ENCODE measurements at regions of chr2 and their contacts with region 1.

Region 1: DNA sequence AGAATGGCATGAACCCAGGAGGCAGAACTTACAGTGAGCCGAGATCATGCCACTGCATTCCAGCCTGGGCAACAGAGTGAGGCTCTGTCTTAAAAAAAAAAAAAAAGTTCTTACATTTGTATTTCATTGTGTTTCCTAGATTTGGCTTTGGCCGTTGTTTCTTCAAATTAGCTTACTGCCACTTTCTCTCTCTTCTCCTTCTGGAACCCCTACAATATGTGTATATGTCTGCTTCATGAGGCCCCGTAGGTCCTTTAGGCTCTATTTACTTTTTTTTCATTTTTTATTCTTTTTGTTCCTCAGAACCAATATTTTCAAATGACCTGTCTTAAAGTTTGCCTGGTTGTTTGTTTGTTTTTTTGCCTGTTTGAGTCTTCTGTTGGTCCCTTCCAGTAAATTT is 41.2 kb downstream of the RMDN2 start:
- DNase-seq: no peak
- ATAC-seq: no peak
- H3K4me3 ChIP-seq: no peak overlapping the region
- H3K27ac ChIP-seq: no peak overlapping the region
- H3K4me1 ChIP-seq: peaks cover 20% of the 10 kb centered on the region
- H3K27me3 ChIP-seq: no peaks in the 10 kb centered on the region
- CTCF ChIP-seq: no peak
- EP300 ChIP-seq: no peak
- POLR2A ChIP-seq: no peak
- RAD21 ChIP-seq: no peak

Region 2: GRCh38 chr2:37173741-37174140 is 792.6 kb before region 1 on chr2:
- CTCF ChIA-PET with region 1: no interaction called
- POLR2A ChIA-PET with region 1: no interaction called
- in situ Hi-C with region 1: no loop called
- intact Hi-C with region 1: no loop called
- DNase-seq: no peak
- ATAC-seq: no peak
- H3K4me3 ChIP-seq: no peak overlapping the region
- H3K27ac ChIP-seq: no peak overlapping the region
- H3K4me1 ChIP-seq: peaks cover 15% of the 10 kb centered on the region
- H3K27me3 ChIP-seq: peaks cover 0 to 16% of the 10 kb centered on the region in 2 experiments; a peak in 2 of 5 replicates
- CTCF ChIP-seq: no peak
- EP300 ChIP-seq: no peak
- POLR2A ChIP-seq: no peak
- RAD21 ChIP-seq: no peak

Region 3: DNA sequence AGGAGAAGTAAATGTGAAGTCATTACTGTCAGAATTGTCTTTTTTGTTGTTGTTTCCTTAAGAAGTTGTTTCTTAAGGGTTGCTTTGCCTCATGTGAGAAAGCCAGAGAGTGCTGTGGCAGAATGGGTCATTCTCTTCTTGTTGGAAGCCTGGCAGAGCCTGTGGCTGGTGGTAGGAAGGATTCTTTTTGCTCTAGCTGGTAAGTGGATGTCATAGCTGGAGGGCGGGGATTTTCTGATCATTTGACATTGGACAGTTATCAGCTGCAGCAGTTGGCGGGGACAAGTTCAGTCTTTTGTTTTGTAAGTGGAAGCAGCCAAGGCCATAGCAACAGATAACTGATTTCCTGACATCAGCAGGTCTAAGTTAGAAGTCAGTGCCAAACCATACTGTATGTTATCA is 46.7 kb before region 1 on chr2:
- CTCF ChIA-PET with region 1: no interaction called
- POLR2A ChIA-PET with region 1: interaction called, 23 read pairs
- in situ Hi-C with region 1: no loop called
- intact Hi-C with region 1: loop called (anchors 1 kb)
- DNase-seq: peak; percentile 95
- ATAC-seq: peak; percentile 80
- H3K4me3 ChIP-seq: peak overlapping the region; percentile 6 to 44 (median 39); a peak in 4 of 6 replicates
- H3K27ac ChIP-seq: peak overlapping the region; percentile 91
- H3K4me1 ChIP-seq: peaks cover 94% of the 10 kb centered on the region
- H3K27me3 ChIP-seq: no peaks in the 10 kb centered on the region
- CTCF ChIP-seq: no peak
- EP300 ChIP-seq: peak in 1 of 2 experiments; percentile 82; a peak in 2 of 4 replicates
- POLR2A ChIP-seq: peak in 1 of 2 experiments; percentile 65; a peak in 2 of 4 replicates
- RAD21 ChIP-seq: no peak

Region 4: GRCh38 chr2:37925063-37925897 is 41.0 kb before region 1 on chr2 and contains the start of gene RMDN2:
- CTCF ChIA-PET with region 1: no interaction called
- POLR2A ChIA-PET with region 1: interaction called, 23 read pairs
- in situ Hi-C with region 1: no loop called
- intact Hi-C with region 1: loop called (anchors 1 kb)
- DNase-seq: peak; percentile 97
- ATAC-seq: peak; percentile 97
- H3K4me3 ChIP-seq: peak within 1 kb of the TSS; percentile 78 to 97 (median 90)
- H3K27ac ChIP-seq: peak within 1 kb of the TSS; percentile 98
- H3K4me1 ChIP-seq: peaks cover 75% of the 10 kb centered on the region
- H3K27me3 ChIP-seq: no peaks in the 10 kb centered on the region
- CTCF ChIP-seq: peak; percentile 63
- EP300 ChIP-seq: peak in 1 of 2 experiments; percentile 75; a peak in 2 of 4 replicates
- POLR2A ChIP-seq: peak; percentile 97 to 98
- RAD21 ChIP-seq: peak; percentile 84; the same call in 1 of the 2 replicates
- total RNA-seq, gene RMDN2: 4.7 and 8.9 TPM in 2 replicates

Region 5: DNA sequence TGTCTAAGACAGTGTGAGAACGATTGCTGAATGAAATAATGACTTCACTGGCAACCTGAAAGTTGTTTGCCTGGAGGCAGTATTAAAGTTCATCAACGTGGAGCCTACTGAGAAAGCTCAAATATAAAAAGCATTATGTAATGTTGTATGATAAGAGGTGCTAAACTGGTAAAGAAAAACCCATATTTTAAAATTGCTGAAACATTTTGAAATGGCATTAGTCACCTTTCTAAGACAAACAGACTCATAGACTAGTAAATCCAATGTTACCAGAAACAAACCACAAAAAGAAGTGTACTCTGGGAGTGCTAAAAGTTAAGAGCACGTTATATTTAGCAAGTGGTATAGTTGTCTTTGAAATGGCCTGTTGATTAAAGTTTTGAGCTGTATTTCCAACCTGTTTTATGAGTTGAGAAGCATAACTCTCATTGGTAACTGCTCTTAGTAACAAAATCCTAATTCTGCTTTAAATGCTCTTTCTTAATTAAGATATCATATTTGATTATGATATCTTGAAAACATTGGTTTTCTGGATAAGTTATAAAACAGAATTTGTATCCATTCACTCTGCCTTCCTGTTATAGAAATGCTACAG is 46.9 kb after region 1 on chr2:
- CTCF ChIA-PET with region 1: no interaction called
- POLR2A ChIA-PET with region 1: no interaction called
- in situ Hi-C with region 1: no loop called
- intact Hi-C with region 1: no loop called
- DNase-seq: no peak
- ATAC-seq: no peak
- H3K4me3 ChIP-seq: no peak overlapping the region
- H3K27ac ChIP-seq: no peak overlapping the region
- H3K4me1 ChIP-seq: no peaks in the 10 kb centered on the region
- H3K27me3 ChIP-seq: no peaks in the 10 kb centered on the region
- CTCF ChIP-seq: no peak
- EP300 ChIP-seq: no peak
- POLR2A ChIP-seq: no peak
- RAD21 ChIP-seq: no peak

Measured in HepG2 (cell line).